Activated T-helper 2 cell treated with anti-CD3 and anti-CD28 coated beads, Interferon-gamma antibody, Interleukin-2, Interleukin-4, amounts not matched to agents 10 μg/mL and 5 μg/mL and 100 μg/mL, durations not matched to agents 14 hours and 24 hours and 36 hours (primary cell): ENCODE measurements at regions of chr14 and their contacts with region 1.

Region 1: DNA sequence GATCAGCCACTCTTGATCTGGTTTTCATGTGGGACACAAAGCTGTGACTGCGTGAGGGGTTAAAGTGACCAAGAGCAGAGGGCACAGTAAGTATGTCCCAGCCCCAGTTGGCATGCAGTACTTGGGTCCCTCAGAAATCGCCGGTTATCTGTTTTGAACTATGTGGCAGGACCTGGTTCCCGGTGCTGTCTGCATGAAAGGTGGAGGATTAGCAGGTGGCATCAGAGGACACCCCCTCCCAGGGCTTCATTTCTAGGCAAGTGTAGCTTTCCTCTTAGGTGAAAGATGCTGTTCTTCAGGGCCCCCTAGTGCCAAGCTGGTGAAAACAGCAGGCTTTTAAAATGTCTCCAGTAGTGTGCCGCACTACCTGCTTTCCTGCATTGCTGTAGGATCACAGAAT is 57.1 kb downstream of the ATG14 start:
- DNase-seq: peak; percentile 49
- H3K4me3 Mint-ChIP-seq: no peak overlapping the region
- H3K27ac Mint-ChIP-seq: peak overlapping the region; percentile 62
- H3K4me1 Mint-ChIP-seq: peaks cover 28% of the 10 kb centered on the region
- H3K27me3 Mint-ChIP-seq: no peaks in the 10 kb centered on the region

Region 2: DNA sequence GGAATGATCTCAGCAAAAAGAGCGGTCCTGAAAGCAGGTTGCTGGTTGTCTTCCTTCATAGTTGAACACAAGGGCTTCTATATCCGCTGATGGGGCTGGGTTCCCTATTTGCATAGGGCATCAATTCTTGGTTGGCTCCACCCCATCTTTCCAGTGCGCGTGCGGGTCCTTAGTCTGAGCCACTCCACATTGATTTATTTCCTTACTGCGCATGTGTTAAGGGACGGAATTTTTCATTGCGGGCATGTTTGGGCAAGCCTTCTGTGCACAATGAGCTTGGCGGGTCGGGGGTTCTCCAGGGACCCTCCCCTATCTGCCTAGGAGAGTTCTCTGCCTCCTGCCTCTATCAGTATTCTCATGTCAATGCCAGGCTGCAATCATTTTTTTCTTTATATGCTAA is 141.9 kb before region 1 on chr14:
- intact Hi-C with region 1: loop called (anchors 2 kb)
- DNase-seq: no peak
- H3K4me3 Mint-ChIP-seq: no peak overlapping the region
- H3K27ac Mint-ChIP-seq: no peak overlapping the region
- H3K4me1 Mint-ChIP-seq: peaks cover 5% of the 10 kb centered on the region
- H3K27me3 Mint-ChIP-seq: peaks cover 3% of the 10 kb centered on the region

Region 3: DNA sequence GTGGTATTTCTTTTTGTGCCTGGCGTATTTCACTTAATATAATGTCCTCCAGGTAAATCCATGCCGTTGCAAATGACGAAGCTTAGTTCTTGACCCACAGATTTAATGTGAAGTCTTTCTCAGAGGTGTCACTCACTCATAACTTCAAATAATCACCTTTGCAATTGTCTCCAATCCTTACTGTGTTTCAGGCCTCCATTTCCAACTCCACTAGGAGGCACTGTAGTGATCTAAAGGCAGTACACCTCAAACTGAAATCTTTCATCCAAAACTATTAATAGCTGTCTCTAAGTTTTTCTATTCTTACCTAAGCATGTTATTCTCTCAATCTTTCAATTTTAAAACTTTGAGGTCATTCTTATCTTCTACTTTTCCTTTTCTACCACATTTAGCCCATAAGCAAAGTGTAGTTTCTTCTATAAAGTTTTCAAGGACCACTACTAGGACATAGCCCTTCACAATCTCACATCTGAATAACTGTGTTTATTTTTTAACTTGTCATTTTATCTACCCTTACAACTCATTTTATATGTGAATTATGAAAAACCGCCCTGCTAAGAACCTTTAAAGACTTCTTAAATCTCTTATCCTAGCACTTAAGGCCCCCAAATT is 108.7 kb before region 1 on chr14:
- intact Hi-C with region 1: loop called (anchors 1 kb)
- DNase-seq: no peak
- H3K4me3 Mint-ChIP-seq: no peak overlapping the region
- H3K27ac Mint-ChIP-seq: no peak overlapping the region
- H3K4me1 Mint-ChIP-seq: no peaks in the 10 kb centered on the region
- H3K27me3 Mint-ChIP-seq: peaks cover 43% of the 10 kb centered on the region

Region 4: DNA sequence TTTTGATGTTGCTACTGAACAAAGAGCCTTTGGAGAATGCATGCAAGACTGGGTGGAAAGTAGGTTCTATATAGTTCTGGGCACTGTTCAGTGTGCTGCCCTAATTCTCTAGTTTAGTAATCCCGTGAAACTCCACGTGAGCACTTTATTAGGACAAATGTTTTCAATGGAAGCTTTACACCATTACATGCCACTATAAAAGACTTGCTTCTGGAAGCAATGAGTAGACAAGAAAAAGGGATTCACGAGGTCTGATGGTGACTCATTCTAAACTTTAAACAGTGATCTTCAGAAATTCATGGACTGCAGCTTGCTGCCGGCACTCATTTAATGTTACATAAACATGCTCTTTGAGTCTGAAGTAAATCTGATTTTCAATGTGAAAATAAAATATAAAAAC is 34.8 kb after region 1 on chr14:
- intact Hi-C with region 1: no loop called
- DNase-seq: no peak
- H3K4me3 Mint-ChIP-seq: no peak overlapping the region
- H3K27ac Mint-ChIP-seq: peak overlapping the region; percentile 12
- H3K4me1 Mint-ChIP-seq: peaks cover 31% of the 10 kb centered on the region
- H3K27me3 Mint-ChIP-seq: no peaks in the 10 kb centered on the region